T-cell (primary cell): ENCODE measurements at regions of chr13 and their contacts with region 1.

Region 1: DNA sequence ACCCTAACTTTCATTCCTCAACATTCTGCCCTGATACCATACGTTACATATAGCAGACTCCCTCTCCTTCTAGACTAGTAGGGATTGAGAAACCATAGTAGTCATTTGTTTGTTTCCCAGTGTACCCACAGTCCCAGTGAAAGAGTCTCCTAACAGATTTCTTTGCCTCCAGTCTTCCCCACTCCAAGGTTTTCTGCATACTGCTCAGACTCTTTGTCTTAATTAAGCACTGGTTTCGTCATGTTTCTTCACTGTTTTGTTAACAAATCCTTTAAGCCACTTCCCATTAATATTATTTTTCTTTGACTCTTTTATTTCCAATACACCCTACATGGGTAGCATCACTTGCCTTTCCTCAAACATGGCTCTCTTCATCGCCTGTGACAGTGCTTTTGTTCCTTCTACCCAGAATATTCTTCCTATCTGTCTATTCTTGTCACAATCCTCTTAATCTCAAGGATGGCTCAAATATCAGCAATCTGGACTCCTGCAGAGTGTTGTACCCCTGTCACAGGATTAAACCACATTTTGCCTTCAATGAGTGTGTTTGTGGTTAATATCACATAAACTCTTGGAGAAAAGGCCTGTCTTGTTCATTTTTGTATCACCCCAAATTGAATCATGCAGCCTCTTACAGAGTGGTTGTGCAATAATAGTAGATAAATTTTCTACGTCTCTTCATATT is 92.7 kb upstream of the KLF12 start:
- DNase-seq: no peak
- ATAC-seq: no peak
- H3K4me3 ChIP-seq: no peak overlapping the region
- H3K4me3 Mint-ChIP-seq: no peak overlapping the region
- H3K27ac ChIP-seq: no peak overlapping the region
- H3K27ac Mint-ChIP-seq: no peak overlapping the region
- H3K4me1 ChIP-seq: peaks cover 11% of the 10 kb centered on the region in 2 experiments
- H3K4me1 Mint-ChIP-seq: peaks cover 25 to 30% (median 29%) of the 10 kb centered on the region in 3 donors
- H3K27me3 ChIP-seq: no peaks in the 10 kb centered on the region
- H3K27me3 Mint-ChIP-seq: no peaks in the 10 kb centered on the region

Region 2: DNA sequence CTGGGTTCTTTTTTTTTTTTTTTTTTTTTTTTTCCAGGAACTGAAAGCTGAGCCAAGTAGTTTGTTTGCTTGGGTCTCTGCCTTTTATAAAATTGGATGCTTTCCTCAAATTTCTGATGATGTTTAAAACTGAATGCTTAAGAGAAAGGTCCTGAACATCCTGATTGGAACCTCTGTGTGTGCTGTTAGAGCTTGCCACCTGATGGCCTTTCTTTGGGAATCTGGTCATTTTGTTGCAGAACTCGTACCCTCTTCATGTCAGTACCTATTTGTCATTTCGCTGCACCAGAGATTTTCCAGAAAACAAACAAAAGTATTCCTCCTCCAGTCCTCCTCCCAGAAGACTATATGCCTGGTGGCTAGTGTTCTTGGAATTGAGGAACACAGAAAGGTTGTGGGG is 11.5 kb before region 1 on chr13:
- CTCF ChIA-PET with region 1: interaction called in 1 of 2 experiments, 3 read pairs
- POLR2A ChIA-PET with region 1: interaction called in 1 of 2 experiments, 10 read pairs
- DNase-seq: no peak
- ATAC-seq: no peak
- H3K4me3 ChIP-seq: no peak overlapping the region
- H3K4me3 Mint-ChIP-seq: no peak overlapping the region
- H3K27ac ChIP-seq: no peak overlapping the region
- H3K27ac Mint-ChIP-seq: no peak overlapping the region
- H3K4me1 ChIP-seq: no peaks in the 10 kb centered on the region
- H3K4me1 Mint-ChIP-seq: peaks cover 6 to 17% (median 7%) of the 10 kb centered on the region in 3 donors
- H3K27me3 ChIP-seq: no peaks in the 10 kb centered on the region
- H3K27me3 Mint-ChIP-seq: no peaks in the 10 kb centered on the region

Region 3: GRCh38 chr13:74325106-74325505 is 98.2 kb after region 1 on chr13:
- CTCF ChIA-PET with region 1: no interaction called
- POLR2A ChIA-PET with region 1: no interaction called
- DNase-seq: no peak
- ATAC-seq: no peak
- H3K4me3 ChIP-seq: no peak overlapping the region
- H3K4me3 Mint-ChIP-seq: no peak overlapping the region
- H3K27ac ChIP-seq: no peak overlapping the region
- H3K27ac Mint-ChIP-seq: no peak overlapping the region
- H3K4me1 ChIP-seq: no peaks in the 10 kb centered on the region
- H3K4me1 Mint-ChIP-seq: no peaks in the 10 kb centered on the region
- H3K27me3 ChIP-seq: no peaks in the 10 kb centered on the region
- H3K27me3 Mint-ChIP-seq: no peaks in the 10 kb centered on the region